MCF 10A (cell line): ENCODE measurements at regions of chr3 and their contacts with region 1.

Region 1: GRCh38 chr3:120417272-120417911 is 33.4 kb downstream of the FSTL1 start:
- DNase-seq: peak; percentile 97
- H3K4me3 Mint-ChIP-seq: peak overlapping the region; percentile 76
- H3K27ac Mint-ChIP-seq: peak overlapping the region; percentile 91
- H3K4me1 Mint-ChIP-seq: peaks cover 28% of the 10 kb centered on the region
- H3K27me3 Mint-ChIP-seq: no peaks in the 10 kb centered on the region
- CTCF ChIP-seq: peak; percentile 89

Region 2: GRCh38 chr3:120239644-120240043 is 177.7 kb before region 1 on chr3:
- CTCF ChIA-PET with region 1: interaction called, 148 read pairs
- POLR2A ChIA-PET with region 1: interaction called, 17 read pairs
- intact Hi-C with region 1: loop called (anchors 1 kb)
- DNase-seq: no peak
- H3K4me3 Mint-ChIP-seq: no peak overlapping the region
- H3K27ac Mint-ChIP-seq: no peak overlapping the region
- H3K4me1 Mint-ChIP-seq: no peaks in the 10 kb centered on the region
- H3K27me3 Mint-ChIP-seq: no peaks in the 10 kb centered on the region
- CTCF ChIP-seq: no peak

Region 3: GRCh38 chr3:120348981-120349818 is 68.2 kb before region 1 on chr3 and contains the start of gene LRRC58:
- CTCF ChIA-PET with region 1: interaction called, 63 read pairs
- POLR2A ChIA-PET with region 1: interaction called, 76 read pairs
- intact Hi-C with region 1: loop called (anchors 1 kb)
- DNase-seq: peak; percentile 95
- H3K4me3 Mint-ChIP-seq: peak within 1 kb of the TSS; percentile 77
- H3K27ac Mint-ChIP-seq: peak within 1 kb of the TSS; percentile 83
- H3K4me1 Mint-ChIP-seq: peaks cover 34% of the 10 kb centered on the region
- H3K27me3 Mint-ChIP-seq: no peaks in the 10 kb centered on the region
- CTCF ChIP-seq: peak; percentile 8
- total RNA-seq, gene LRRC58: 25.8 and 28.8 TPM in 2 replicates

Region 4: DNA sequence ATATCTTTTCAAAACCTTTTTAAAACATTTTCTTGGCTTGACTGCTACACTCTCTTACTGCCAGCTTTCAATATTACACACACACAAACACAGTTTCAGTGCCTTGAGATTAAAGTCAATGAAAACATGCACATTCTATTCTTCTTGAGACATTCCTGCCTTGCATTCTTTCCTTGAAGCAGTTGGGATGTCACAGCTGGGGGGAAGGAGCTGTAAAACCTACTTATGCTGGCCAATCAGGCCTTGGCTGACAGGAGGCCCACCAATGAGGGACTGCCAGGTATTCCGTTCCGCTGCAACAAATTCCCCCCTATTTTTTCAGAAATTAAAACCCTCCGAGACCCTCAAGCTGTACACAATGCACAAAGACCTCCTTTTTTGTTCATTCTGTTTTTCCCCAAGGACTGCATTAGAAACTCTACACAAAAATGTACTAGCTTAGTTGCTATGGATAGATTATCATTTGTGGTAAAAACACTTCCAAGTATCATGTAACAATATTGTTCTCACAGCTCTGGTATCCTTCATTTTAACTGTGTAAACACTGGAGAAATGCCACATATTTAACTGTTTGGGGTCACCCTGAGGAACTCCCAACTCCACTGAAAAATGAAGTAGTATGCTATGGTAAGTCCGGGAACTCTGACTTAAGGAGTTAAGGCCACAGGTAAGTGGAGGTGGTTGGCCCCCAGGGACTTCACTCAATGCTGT is 14.9 kb after region 1 on chr3:
- CTCF ChIA-PET with region 1: interaction called, 33 read pairs
- POLR2A ChIA-PET with region 1: interaction called, 3 read pairs
- intact Hi-C with region 1: no loop called
- DNase-seq: no peak
- H3K4me3 Mint-ChIP-seq: no peak overlapping the region
- H3K27ac Mint-ChIP-seq: no peak overlapping the region
- H3K4me1 Mint-ChIP-seq: peaks cover 22% of the 10 kb centered on the region
- H3K27me3 Mint-ChIP-seq: no peaks in the 10 kb centered on the region
- CTCF ChIP-seq: no peak

Region 5: DNA sequence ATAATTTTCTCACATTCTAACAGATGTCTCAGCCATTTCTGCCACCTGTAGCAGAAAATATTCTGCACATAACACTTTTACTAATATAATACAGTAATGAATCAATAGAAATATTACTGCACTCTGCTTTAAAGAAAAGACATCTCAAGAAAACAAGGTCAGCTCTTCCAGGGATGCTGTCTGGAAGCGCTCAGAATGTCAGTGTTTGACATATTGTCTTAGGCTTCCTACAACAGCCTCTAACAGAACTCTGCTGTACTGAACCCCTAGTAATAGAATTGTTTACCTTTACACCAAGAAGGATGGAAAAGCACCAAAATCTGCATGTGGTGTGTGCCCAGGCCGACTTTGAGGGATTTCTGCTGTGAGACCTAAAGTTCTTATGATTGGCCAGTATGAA is 95.3 kb after region 1 on chr3:
- CTCF ChIA-PET with region 1: interaction called, 28 read pairs
- POLR2A ChIA-PET with region 1: no interaction called
- intact Hi-C with region 1: loop called (anchors 1 kb)
- DNase-seq: no peak
- H3K4me3 Mint-ChIP-seq: no peak overlapping the region
- H3K27ac Mint-ChIP-seq: no peak overlapping the region
- H3K4me1 Mint-ChIP-seq: no peaks in the 10 kb centered on the region
- H3K27me3 Mint-ChIP-seq: no peaks in the 10 kb centered on the region
- CTCF ChIP-seq: no peak

Region 6: DNA sequence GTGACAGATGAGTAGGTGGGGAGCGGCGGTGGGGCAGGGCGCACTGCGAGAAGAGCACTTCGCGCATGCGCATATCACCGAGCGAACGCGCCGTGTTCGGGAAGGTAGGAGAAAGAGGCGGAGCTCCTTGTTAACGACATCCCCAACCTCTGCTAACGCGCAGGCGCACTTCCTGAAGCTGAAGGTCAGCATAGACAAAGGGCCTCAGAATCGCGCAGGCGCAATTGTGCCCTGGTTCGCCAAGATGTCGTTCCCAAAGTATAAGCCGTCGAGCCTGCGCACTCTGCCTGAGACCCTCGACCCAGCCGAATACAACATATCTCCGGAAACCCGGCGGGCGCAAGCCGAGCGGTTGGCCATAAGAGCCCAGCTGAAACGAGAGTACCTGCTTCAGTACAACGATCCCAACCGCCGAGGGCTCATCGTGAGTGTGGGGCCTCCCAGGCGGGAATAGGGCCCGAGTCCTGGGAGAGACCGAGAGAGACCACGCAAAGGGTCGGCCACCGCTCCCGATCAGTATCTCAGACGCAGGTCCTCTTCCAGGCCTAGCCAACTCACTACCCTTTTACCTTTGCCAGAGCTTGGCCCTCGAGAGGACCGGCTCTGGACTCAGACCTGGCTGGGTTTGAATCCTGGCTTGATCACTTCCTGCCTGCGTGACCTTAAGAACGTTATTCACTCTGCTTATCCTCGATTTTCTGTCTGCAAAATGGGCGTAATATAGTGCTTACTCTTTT is 178.9 kb after region 1 on chr3 and contains the start of gene NDUFB4:
- CTCF ChIA-PET with region 1: interaction called, 16 read pairs
- POLR2A ChIA-PET with region 1: interaction called, 9 read pairs
- intact Hi-C with region 1: no loop called
- DNase-seq: peak; percentile 99
- H3K4me3 Mint-ChIP-seq: peak within 1 kb of the TSS; percentile 92
- H3K27ac Mint-ChIP-seq: peak within 1 kb of the TSS; percentile 95
- H3K4me1 Mint-ChIP-seq: peaks cover 5% of the 10 kb centered on the region
- H3K27me3 Mint-ChIP-seq: peaks cover 11% of the 10 kb centered on the region
- CTCF ChIP-seq: no peak
- total RNA-seq, gene NDUFB4: 96.1 and 113 TPM in 2 replicates

Region 7: GRCh38 chr3:120645083-120645845 is 227.9 kb after region 1 on chr3:
- CTCF ChIA-PET with region 1: no interaction called
- POLR2A ChIA-PET with region 1: no interaction called
- intact Hi-C with region 1: no loop called
- DNase-seq: no peak
- H3K4me3 Mint-ChIP-seq: no peak overlapping the region
- H3K27ac Mint-ChIP-seq: no peak overlapping the region
- H3K4me1 Mint-ChIP-seq: no peaks in the 10 kb centered on the region
- H3K27me3 Mint-ChIP-seq: no peaks in the 10 kb centered on the region
- CTCF ChIP-seq: no peak